ENCODE measurements at regions of chr2 and their contacts with region 1.

Region 1: DNA sequence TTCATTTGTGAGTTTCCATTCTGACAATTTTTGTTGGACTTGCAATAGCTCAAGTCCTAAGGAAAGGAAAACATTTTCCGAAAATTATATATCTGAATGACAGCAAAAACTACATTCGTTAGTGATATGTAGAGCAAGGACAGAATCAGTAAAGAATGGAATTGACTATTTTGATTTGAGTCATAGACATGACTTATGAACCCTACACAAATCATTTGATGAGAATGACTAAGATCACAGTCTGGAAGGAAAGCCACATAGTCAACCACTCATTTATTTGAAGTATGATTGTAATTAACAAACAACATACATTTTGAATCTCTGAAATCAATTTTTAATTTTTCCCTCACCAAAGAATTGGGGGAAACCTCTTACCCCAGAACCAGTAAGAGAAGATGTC is 231.6 kb upstream of the CRIM1 start:
- DNase-seq: no peak
- ATAC-seq: peak; percentile 91
- H3K4me3 Mint-ChIP-seq: no peak overlapping the region
- H3K27ac Mint-ChIP-seq: no peak overlapping the region
- H3K4me1 Mint-ChIP-seq: peaks cover 8% of the 10 kb centered on the region
- H3K27me3 Mint-ChIP-seq: peaks cover 27% of the 10 kb centered on the region

Region 2: GRCh38 chr2:36147670-36148390 is 23.8 kb after region 1 on chr2:
- CTCF ChIA-PET with region 1: no interaction called
- POLR2A ChIA-PET with region 1: no interaction called
- intact Hi-C with region 1: loop called in 1 of 2 experiments (anchors 1 kb)
- DNase-seq: no peak
- ATAC-seq: peak; percentile 84
- H3K4me3 Mint-ChIP-seq: no peak overlapping the region
- H3K27ac Mint-ChIP-seq: no peak overlapping the region
- H3K4me1 Mint-ChIP-seq: peaks cover 11% of the 10 kb centered on the region
- H3K27me3 Mint-ChIP-seq: peaks cover 7% of the 10 kb centered on the region

Region 3: DNA sequence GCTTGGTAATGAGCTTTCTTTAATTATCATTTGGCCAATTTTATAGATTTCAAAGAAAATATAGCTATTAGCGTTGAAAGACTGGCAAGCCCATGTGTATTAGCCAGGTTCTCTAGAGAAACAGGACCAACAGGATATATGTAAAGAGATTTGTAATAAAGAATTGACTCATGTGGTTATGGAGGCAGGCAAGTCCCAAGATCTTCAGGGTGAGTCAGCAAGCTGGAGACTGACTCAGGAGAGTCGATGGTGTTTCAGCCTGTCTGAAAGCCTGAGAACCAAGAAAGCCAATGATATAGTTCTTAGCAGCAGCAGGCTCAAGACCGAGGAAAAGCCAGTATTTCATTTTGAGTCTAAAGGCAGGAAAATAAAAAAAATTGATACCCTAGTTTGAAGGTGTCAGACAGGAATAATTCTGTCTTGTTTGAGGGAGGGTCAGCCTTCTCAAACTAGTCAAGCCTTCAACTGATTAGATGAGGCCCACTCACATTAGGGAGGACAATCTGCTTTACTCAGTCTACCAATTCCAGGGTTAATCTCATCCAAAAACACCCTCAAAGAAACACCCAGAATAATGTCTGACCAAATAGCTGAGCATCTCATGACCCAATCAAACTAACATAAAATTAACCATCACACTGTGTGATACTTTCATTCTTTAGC is 153.3 kb after region 1 on chr2:
- CTCF ChIA-PET with region 1: no interaction called
- POLR2A ChIA-PET with region 1: no interaction called
- intact Hi-C with region 1: loop called in 1 of 2 experiments (anchors 5 kb)
- DNase-seq: peak; percentile 59
- ATAC-seq: peak; percentile 96
- H3K4me3 Mint-ChIP-seq: no peak overlapping the region
- H3K27ac Mint-ChIP-seq: peak overlapping the region; percentile 11
- H3K4me1 Mint-ChIP-seq: no peaks in the 10 kb centered on the region
- H3K27me3 Mint-ChIP-seq: no peaks in the 10 kb centered on the region

Measured in activated CD4-positive, alpha-beta T cell treated with anti-CD3 and anti-CD28 coated beads for 36 hours (primary cell).